RWPE1 (cell line): ENCODE measurements at regions of chr2 and their contacts with region 1.

Region 1: DNA sequence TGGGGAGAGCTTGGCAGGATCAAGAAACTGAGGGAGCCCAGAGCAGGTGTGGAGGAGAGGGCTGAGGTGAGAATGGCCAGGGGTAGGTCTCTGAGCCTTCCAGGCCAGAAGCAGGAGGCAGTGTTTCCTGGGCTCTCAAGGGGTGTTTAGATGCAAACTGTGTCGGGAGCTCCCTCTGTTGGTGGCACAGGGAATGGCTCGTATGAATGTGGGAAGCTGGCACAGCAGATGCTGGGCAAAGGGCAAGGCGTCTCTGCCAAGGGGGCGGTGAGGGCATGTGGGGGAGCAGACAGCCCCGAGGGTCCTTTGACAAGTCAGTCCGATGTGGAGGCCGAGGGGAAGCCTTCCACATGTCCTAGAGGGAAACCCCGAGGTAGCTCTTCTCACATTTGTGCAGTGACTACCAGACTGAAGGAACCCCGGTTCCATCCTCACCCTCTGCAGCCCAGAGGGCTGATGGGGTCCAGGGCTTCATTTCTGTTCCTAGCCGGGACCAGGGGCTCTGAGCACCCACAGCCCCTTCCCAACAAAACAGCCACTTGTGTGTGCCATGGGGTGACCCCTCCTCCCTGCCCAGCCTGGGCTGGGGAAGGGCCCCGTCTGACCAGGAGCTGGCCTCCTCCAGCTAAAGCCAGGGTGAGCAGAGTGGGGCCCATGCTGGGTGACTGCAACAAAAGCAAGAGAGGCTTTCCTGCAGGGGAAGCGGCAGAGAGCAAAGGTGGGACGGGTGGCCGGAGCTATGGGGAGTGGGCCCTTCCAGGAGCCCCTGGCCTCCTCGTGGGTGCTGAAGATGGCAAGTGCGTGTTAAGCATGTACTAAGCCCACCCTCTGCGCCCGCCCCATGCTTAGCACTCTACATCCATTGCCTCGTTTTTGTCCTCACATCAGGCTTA is 103.4 kb downstream of the SEPTIN10 start:
- DNase-seq: peak; percentile 72
- H3K27ac ChIP-seq: no peak overlapping the region
- CTCF ChIP-seq: peak; percentile 93

Region 2: DNA sequence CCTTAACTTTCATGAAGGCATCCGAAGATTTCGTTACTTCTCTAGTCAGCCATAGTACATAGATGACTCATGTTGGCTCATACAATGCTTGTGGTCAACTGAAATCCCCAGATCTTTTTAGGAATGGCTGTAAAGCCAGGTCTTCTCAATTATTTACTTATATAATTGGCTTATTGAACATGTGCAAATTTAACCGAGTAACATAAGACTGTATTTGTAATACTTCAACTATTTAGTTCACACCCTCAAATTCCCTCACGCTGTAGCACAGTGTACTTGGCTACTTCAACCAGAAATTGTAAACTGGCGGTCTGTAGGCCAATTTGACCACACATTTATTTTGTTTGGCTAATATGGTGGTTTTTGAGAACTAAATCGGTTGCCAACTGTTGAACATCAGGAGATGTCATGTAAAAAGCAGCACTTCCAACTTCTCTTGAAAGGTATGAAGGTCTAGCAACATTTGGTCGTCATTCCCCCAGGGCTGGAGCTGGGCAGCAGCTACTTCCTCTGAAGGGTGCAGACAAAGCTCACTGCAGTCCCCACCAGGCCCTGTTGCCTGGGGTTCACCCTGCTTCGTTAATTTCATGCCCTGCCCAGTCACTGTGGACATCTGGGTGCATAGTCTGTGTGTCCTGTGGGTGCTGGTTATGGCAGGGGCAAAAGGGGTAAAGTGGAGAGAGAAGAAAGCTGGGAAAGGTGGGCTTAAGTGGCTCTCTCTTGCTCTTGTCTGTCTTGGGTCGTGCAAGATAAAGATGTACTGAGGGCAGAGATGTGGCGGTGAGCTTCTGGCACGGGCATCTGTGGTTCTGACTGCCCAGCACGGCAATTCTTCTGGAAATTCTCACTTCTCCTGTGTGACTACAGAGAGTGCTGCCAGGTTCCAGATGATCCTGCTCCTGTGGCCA is 384.5 kb before region 1 on chr2:
- CTCF ChIA-PET with region 1: interaction called, 13 read pairs
- POLR2A ChIA-PET with region 1: no interaction called
- DNase-seq: peak; percentile 91
- H3K27ac ChIP-seq: peak overlapping the region; percentile 91
- CTCF ChIP-seq: no peak